ENCODE measurements at regions of chr7 and their contacts with region 1.

Region 1: DNA sequence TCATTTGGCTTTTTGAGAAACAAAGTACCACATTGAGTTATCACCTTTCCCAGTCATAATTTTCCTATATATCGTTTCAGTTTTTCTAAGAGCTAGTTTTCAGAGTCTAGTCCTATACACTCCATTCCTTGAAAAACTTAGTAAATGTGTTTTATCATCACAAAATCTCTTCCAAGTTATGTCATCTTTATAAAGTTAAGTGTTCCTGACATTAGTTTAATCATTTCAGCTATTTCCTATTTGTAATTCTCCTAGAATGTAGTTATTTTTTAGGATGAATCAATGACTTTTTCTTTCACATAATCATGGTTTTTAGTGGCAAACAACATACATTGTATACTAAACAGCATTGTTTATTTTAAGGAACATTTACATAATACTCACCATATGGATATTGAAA is 191.7 kb upstream of the BET1 start:
- DNase-seq: no peak
- H3K4me3 ChIP-seq: no peak overlapping the region
- H3K27ac ChIP-seq: no peak overlapping the region
- H3K4me1 ChIP-seq: no peaks in the 10 kb centered on the region
- H3K27me3 ChIP-seq: no peaks in the 10 kb centered on the region
- CTCF ChIP-seq: no peak
- POLR2A ChIP-seq: no peak

Region 2: GRCh38 chr7:94183289-94183749 is 12.5 kb before region 1 on chr7:
- intact Hi-C with region 1: loop called (anchors 1 kb)
- DNase-seq: no peak
- H3K4me3 ChIP-seq: no peak overlapping the region
- H3K27ac ChIP-seq: peak overlapping the region; percentile 29
- H3K4me1 ChIP-seq: no peaks in the 10 kb centered on the region
- H3K27me3 ChIP-seq: no peaks in the 10 kb centered on the region
- CTCF ChIP-seq: no peak
- POLR2A ChIP-seq: no peak